ENCODE measurements at regions of chr6 and their contacts with region 1.

Region 1: GRCh38 chr6:70884074-70884983 is 72.5 kb downstream of the B3GAT2 start:
- DNase-seq: peak; percentile 59
- ATAC-seq: peak; percentile 83
- H3K4me3 Mint-ChIP-seq: no peak overlapping the region
- H3K27ac Mint-ChIP-seq: no peak overlapping the region
- H3K4me1 Mint-ChIP-seq: no peaks in the 10 kb centered on the region
- H3K27me3 Mint-ChIP-seq: peaks cover 9% of the 10 kb centered on the region

Region 2: DNA sequence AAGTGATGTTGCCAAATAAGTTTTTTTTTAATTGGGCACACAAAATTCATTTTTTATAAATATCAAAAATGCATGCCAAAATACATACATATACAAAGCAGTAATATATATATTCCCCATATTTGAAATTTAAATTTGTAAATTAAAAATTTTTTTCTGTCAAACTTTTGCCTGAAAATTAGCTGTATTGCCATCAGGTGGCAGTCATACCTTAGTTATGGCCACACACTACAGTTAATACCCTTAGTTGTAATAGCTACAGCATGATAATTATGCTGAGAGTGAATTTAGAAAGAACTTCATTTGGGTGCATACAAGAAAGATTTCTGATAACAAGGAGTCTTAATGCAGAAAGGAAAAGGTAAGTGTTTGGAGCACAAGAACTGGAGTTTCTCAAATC is 363.8 kb before region 1 on chr6:
- CTCF ChIA-PET with region 1: interaction called, 14 read pairs
- DNase-seq: no peak
- ATAC-seq: no peak
- H3K4me3 Mint-ChIP-seq: no peak overlapping the region
- H3K27ac Mint-ChIP-seq: no peak overlapping the region
- H3K4me1 Mint-ChIP-seq: no peaks in the 10 kb centered on the region
- H3K27me3 Mint-ChIP-seq: no peaks in the 10 kb centered on the region

Region 3: GRCh38 chr6:70706491-70707123 is 177.7 kb before region 1 on chr6:
- CTCF ChIA-PET with region 1: interaction called, 39 read pairs
- DNase-seq: no peak
- ATAC-seq: no peak
- H3K4me3 Mint-ChIP-seq: no peak overlapping the region
- H3K27ac Mint-ChIP-seq: no peak overlapping the region
- H3K4me1 Mint-ChIP-seq: peaks cover 14% of the 10 kb centered on the region
- H3K27me3 Mint-ChIP-seq: no peaks in the 10 kb centered on the region